PC-9 (cell line): ENCODE measurements at regions of chr2 and their contacts with region 1.

Region 1: DNA sequence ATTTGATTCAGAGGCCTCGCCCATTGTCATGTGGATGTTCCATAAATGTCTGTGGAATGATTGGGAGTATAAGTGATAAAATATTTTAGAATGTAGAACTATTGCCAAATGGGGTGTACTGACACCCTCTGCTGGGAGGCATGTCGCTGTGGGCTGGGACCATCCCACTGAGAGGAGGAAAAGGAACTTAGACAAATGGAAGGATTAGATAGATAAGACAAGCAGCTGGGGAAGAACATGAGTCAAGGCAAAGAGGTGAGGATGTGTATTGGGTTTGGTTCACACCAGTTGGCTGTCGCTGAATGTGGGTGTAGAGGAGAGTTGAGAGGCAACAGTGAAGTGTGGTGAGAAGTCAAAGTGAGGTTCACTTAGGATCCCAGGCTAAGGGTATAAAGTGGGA is 4.0 kb downstream of the C2orf74 start:
- DNase-seq: no peak
- H3K4me3 ChIP-seq: no peak overlapping the region
- H3K27ac ChIP-seq: no peak overlapping the region
- H3K4me1 ChIP-seq: no peaks in the 10 kb centered on the region
- H3K27me3 ChIP-seq: no peaks in the 10 kb centered on the region
- CTCF ChIP-seq: no peak

Region 2: DNA sequence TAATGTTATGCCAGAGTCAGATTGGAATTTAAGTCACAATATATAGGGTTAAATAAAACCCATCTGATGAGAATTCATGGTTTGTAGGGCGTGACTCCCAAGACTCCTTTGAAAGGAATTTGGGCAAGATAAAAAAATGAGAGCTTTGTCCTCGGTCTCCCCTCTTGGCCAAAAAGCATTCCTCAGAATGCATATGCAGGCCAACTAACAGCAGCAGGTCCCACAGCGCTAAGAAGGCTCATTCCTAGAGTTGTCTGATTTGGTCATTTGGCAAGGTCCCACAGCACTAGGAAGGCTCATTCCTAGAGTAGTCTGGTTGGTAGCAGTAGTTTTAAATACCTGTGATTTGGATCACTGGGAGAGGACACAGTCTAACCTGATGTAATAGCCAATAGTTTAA is 923.7 kb after region 1 on chr2:
- CTCF ChIA-PET with region 1: no interaction called
- POLR2A ChIA-PET with region 1: interaction called, 17 read pairs
- intact Hi-C with region 1: no loop called
- DNase-seq: no peak
- H3K4me3 ChIP-seq: no peak overlapping the region
- H3K27ac ChIP-seq: no peak overlapping the region
- H3K4me1 ChIP-seq: no peaks in the 10 kb centered on the region
- H3K27me3 ChIP-seq: no peaks in the 10 kb centered on the region
- CTCF ChIP-seq: no peak

Region 3: GRCh38 chr2:62760555-62760954 is 1594.6 kb after region 1 on chr2:
- CTCF ChIA-PET with region 1: interaction called, 12 read pairs
- POLR2A ChIA-PET with region 1: no interaction called
- intact Hi-C with region 1: no loop called
- DNase-seq: no peak
- H3K4me3 ChIP-seq: no peak overlapping the region
- H3K27ac ChIP-seq: no peak overlapping the region
- H3K4me1 ChIP-seq: no peaks in the 10 kb centered on the region
- H3K27me3 ChIP-seq: no peaks in the 10 kb centered on the region
- CTCF ChIP-seq: no peak